PC-3 (cell line): ENCODE measurements at regions of chr5 and their contacts with region 1.

Region 1: DNA sequence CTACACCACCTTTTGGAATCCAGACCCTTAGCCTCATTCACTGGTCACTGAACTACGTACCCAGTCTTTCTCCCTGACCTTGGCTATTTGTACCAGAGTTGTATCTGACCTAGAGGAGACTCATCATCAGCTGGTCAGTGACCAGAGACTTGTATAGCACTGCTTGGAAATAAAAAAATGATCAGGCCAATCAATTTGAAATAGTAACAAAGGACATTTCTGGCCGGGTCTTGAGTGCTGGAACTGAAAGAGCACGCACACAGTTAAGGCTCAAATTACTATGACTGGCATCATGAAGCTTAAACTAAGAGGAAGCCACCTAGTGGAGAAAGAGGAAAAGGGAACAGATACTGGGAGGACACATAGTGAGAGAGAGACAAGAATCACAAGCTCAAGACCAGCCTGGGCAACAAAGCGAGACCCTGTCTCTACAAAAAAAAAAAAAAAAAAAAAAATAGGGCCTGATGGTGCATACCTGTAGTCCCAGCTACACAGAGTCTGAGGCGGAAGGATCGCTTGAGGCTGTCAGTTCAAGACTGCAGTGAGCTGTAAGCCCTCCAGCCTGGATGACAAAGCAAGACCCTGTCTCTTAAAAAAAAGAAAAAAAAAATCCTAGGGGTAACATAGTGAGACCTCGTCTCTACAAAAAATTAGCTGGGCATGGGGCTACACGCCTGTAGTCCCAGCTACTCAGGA is 12.8 kb upstream of the SRP19 start:
- DNase-seq: peak; percentile 66
- ATAC-seq: peak; percentile 99
- H3K4me3 ChIP-seq: no peak overlapping the region
- H3K27ac ChIP-seq: no peak overlapping the region
- H3K4me1 ChIP-seq: no peaks in the 10 kb centered on the region
- H3K27me3 ChIP-seq: no peaks in the 10 kb centered on the region
- CTCF ChIP-seq: peak; percentile 67

Region 2: GRCh38 chr5:112691758-112692157 is 156.5 kb before region 1 on chr5:
- CTCF ChIA-PET with region 1: no interaction called
- POLR2A ChIA-PET with region 1: no interaction called
- intact Hi-C with region 1: loop called (anchors 5 kb)
- DNase-seq: peak; percentile 40
- ATAC-seq: peak; percentile 62
- H3K4me3 ChIP-seq: no peak overlapping the region
- H3K27ac ChIP-seq: no peak overlapping the region
- H3K4me1 ChIP-seq: no peaks in the 10 kb centered on the region
- H3K27me3 ChIP-seq: no peaks in the 10 kb centered on the region
- CTCF ChIP-seq: peak; percentile 44